SK-N-SH (cell line): ENCODE measurements at regions of chr12 and their contacts with region 1.

Region 1: GRCh38 chr12:76621582-76622024 is 62.0 kb upstream of the OSBPL8 start:
- DNase-seq: peak; percentile 63
- H3K4me3 ChIP-seq: no peak overlapping the region; a peak in 1 of 4 replicates
- H3K27ac ChIP-seq: no peak overlapping the region
- H3K4me1 ChIP-seq: peaks cover 0 to 3% of the 10 kb centered on the region in 2 experiments; a peak in 2 of 4 replicates
- H3K27me3 ChIP-seq: no peaks in the 10 kb centered on the region
- CTCF ChIP-seq: peak; percentile 96
- EP300 ChIP-seq: no peak
- RAD21 ChIP-seq: peak; percentile 98

Region 2: DNA sequence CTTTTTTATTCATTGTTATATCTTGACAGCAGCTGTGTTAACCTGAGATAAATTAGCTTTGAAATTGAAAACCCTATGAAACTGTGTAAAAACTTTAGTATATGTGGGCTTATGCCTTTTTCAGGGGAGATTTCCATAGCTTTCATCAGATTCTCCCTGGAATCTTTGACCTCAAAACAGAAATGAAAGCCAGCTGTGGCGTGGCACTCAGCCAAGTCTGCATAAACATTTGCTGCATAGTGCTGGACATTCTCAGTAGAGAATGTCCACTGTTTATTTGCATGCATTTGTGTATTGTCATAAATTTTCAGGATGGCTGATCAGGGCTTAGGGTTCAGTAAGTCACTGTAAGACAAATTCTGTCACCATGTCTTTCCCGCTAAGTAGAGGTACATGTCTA is 421.8 kb before region 1 on chr12:
- CTCF ChIA-PET with region 1: no interaction called
- POLR2A ChIA-PET with region 1: no interaction called
- DNase-seq: no peak
- H3K4me3 ChIP-seq: no peak overlapping the region
- H3K27ac ChIP-seq: no peak overlapping the region
- H3K4me1 ChIP-seq: no peaks in the 10 kb centered on the region
- H3K27me3 ChIP-seq: no peaks in the 10 kb centered on the region
- CTCF ChIP-seq: no peak
- EP300 ChIP-seq: no peak
- RAD21 ChIP-seq: no peak

Region 3: GRCh38 chr12:76633415-76633814 is 11.8 kb after region 1 on chr12:
- CTCF ChIA-PET with region 1: interaction called, 17 read pairs
- POLR2A ChIA-PET with region 1: no interaction called
- DNase-seq: peak; percentile 38
- H3K4me3 ChIP-seq: no peak overlapping the region
- H3K27ac ChIP-seq: no peak overlapping the region
- H3K4me1 ChIP-seq: peaks cover 0 to 5% of the 10 kb centered on the region in 2 experiments; a peak in 3 of 4 replicates
- H3K27me3 ChIP-seq: no peaks in the 10 kb centered on the region
- CTCF ChIP-seq: no peak
- EP300 ChIP-seq: no peak
- RAD21 ChIP-seq: no peak

Region 4: GRCh38 chr12:76820888-76821482 is 199.4 kb after region 1 on chr12:
- CTCF ChIA-PET with region 1: interaction called, 16 read pairs
- POLR2A ChIA-PET with region 1: no interaction called
- DNase-seq: peak; percentile 34
- H3K4me3 ChIP-seq: peak overlapping the region in 1 of 2 experiments; percentile 43; a peak in 1 of 4 replicates
- H3K27ac ChIP-seq: no peak overlapping the region
- H3K4me1 ChIP-seq: no peaks in the 10 kb centered on the region; a peak in 2 of 4 replicates
- H3K27me3 ChIP-seq: no peaks in the 10 kb centered on the region
- CTCF ChIP-seq: peak; percentile 75
- EP300 ChIP-seq: no peak
- RAD21 ChIP-seq: peak; percentile 53

Region 5: DNA sequence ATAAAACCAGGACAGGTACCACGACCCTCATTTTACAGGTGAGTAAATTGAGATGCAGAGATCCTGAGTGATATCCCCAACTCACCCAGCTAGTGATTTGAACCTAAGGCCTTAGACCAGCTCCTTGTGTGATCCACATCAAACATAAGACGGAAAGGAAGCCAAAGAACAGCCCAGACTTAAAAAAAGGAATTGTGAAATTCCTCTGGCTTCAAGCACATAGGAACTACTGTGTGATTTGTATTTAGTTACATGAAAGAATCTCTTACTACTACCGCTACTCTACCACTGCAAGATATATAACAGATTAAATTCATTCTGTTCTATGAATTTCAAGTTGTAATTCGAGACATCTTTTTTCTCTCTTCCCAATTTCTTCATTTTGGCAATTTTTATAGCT is 433.2 kb after region 1 on chr12:
- CTCF ChIA-PET with region 1: no interaction called
- POLR2A ChIA-PET with region 1: no interaction called
- DNase-seq: no peak
- H3K4me3 ChIP-seq: no peak overlapping the region
- H3K27ac ChIP-seq: no peak overlapping the region
- H3K4me1 ChIP-seq: no peaks in the 10 kb centered on the region; a peak in 2 of 4 replicates
- H3K27me3 ChIP-seq: no peaks in the 10 kb centered on the region
- CTCF ChIP-seq: no peak
- EP300 ChIP-seq: no peak
- RAD21 ChIP-seq: no peak